ENCODE measurements at regions of chr11 and their contacts with region 1.

Region 1: DNA sequence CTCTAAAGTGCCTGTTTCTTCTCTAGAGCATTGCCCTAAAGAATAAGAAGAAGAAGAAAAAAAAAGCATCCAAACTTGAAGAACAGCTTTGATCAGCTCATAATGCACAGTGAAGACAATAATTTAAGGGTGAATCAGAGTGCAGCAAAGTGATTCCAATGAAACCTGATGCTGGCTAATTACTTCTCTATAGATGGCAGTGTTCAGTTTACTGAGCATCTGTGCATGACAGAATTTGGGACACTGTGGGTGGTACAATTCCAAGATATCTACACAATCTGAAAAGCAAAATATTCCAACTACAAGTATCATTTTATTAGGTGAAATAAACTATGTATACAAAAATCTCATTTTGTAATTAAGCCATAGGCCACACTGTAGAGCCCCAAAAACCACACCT is 450.5 kb upstream of the CCDC90B start:
- DNase-seq: peak; percentile 90
- H3K4me3 ChIP-seq: no peak overlapping the region
- H3K27ac ChIP-seq: peak overlapping the region; percentile 97
- H3K4me1 ChIP-seq: peaks cover 81% of the 10 kb centered on the region
- H3K27me3 ChIP-seq: no peaks in the 10 kb centered on the region
- CTCF ChIP-seq: peak; percentile 51; the same call in 1 of the 2 replicates

Region 2: GRCh38 chr11:83493917-83494316 is 242.8 kb before region 1 on chr11:
- CTCF ChIA-PET with region 1: no interaction called
- POLR2A ChIA-PET with region 1: interaction called, 14 read pairs
- intact Hi-C with region 1: loop called (anchors 2 kb)
- DNase-seq: no peak
- H3K4me3 ChIP-seq: no peak overlapping the region
- H3K27ac ChIP-seq: peak overlapping the region; percentile 67
- H3K4me1 ChIP-seq: peaks cover 43% of the 10 kb centered on the region
- H3K27me3 ChIP-seq: no peaks in the 10 kb centered on the region
- CTCF ChIP-seq: no peak

Region 3: DNA sequence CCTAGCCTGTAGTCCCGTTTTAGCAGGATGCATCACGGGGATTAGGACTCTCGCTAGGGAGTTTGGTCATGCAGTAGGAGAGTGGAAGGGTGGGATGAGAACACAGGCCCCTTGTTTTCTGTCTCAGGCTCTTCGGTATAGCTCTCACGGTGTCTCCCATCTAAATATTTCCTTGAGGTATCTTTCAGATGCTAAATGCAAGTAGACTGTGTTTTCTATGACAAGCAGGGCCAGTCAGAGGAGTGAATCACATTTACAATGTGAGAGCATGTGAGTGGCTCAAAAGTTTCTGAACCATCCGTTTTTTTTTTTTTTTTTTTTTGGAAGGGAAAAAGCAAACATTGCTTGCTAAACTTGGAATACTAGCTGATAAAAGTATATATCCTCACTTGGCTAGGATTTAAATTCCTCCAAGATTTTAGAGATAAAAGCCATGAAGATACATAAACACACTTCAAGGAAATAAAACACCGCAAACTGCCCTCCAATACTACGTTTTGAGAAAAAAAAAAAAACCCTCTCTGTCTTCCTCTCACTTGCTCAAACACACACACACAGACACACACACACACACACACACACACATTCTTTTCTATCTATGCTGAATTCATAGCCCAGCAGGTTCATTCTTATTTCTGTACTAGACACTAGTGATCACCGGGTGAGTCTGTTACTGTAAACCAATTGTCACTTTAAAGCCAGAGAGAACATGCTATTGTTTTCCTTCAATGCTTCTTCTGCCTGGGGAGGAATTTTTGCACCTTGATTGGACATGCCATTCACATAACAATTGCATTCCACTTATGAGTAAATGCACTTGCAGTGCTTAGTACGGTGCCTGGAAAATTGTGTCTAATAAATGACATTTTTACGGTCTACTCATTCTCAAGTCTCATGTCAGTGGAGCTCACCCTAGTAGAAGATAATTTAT is 225.9 kb before region 1 on chr11:
- CTCF ChIA-PET with region 1: no interaction called
- POLR2A ChIA-PET with region 1: interaction called, 14 read pairs
- intact Hi-C with region 1: no loop called
- DNase-seq: no peak
- H3K4me3 ChIP-seq: no peak overlapping the region
- H3K27ac ChIP-seq: peak overlapping the region; percentile 26
- H3K4me1 ChIP-seq: peaks cover 27% of the 10 kb centered on the region
- H3K27me3 ChIP-seq: no peaks in the 10 kb centered on the region
- CTCF ChIP-seq: no peak

Region 4: DNA sequence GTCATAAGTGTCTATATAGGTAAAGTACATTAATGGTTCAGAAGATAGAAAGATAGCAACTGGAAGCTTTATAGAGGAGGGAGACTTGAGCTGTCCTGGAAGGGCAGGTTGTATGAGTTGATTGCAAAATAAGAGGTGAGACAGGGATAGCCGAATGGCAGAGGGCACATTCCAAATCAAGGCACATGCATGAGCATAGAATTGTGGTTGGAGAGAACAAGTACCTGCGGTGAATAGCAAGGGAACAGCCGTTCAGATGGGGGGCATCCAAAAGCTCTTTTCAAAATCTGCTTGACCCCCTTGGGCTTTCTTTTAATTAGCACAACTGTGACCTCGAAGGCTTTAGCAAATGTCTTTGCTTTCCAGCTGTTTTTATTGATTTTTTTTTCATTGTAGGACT is 22.5 kb after region 1 on chr11:
- CTCF ChIA-PET with region 1: no interaction called
- POLR2A ChIA-PET with region 1: interaction called, 11 read pairs
- intact Hi-C with region 1: no loop called
- DNase-seq: no peak
- H3K4me3 ChIP-seq: no peak overlapping the region
- H3K27ac ChIP-seq: no peak overlapping the region
- H3K4me1 ChIP-seq: peaks cover 41% of the 10 kb centered on the region
- H3K27me3 ChIP-seq: no peaks in the 10 kb centered on the region
- CTCF ChIP-seq: no peak

Region 5: GRCh38 chr11:83918476-83918875 is 181.8 kb after region 1 on chr11:
- CTCF ChIA-PET with region 1: no interaction called
- POLR2A ChIA-PET with region 1: no interaction called
- intact Hi-C with region 1: no loop called
- DNase-seq: no peak
- H3K4me3 ChIP-seq: no peak overlapping the region
- H3K27ac ChIP-seq: no peak overlapping the region
- H3K4me1 ChIP-seq: no peaks in the 10 kb centered on the region
- H3K27me3 ChIP-seq: no peaks in the 10 kb centered on the region
- CTCF ChIP-seq: no peak

Measured in A673 (cell line).